Mammary epithelial cell (primary cell): ENCODE measurements at regions of chr21 and their contacts with region 1.

Region 1: GRCh38 chr21:32569261-32570230 is 15.8 kb downstream of the TCP10L start:
- DNase-seq: peak; percentile 78
- H3K4me3 ChIP-seq: peak overlapping the region; percentile 44 to 63 (median 56)
- H3K27ac ChIP-seq: no peak overlapping the region
- H3K4me1 ChIP-seq: peaks cover 22% of the 10 kb centered on the region
- H3K27me3 ChIP-seq: no peaks in the 10 kb centered on the region
- CTCF ChIP-seq: peak; percentile 89 to 92

Region 2: DNA sequence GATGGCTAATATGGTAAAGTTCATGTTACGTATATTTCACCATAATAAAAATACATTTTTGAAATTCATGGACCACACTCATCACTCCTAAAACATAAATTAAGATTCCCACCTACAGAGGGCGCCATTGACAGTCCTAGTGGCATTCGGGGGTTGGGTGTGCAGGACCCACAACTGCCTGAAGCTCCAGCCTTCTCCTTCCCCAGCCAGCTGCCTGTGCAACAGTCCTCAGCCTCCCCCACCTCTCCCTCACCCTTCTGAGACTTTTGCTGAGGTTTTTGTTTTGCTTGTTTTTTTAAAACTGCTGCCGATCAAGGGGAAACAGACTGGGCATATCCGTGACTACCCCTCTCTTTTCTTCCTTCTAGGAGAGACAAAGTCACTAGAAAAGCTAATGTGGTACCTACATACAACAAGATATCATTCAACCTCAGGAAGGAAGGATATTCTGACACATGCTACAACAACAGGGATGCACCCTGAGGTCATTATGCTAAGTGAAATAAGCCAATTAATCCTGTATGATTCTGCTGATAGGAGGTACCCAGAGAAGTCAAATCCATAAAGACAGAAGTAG is 166.3 kb before region 1 on chr21:
- CTCF ChIA-PET with region 1: interaction called, 6 read pairs
- dilution Hi-C with region 1: no loop called
- in situ Hi-C with region 1: no loop called
- intact Hi-C with region 1: loop called (anchors 1 kb)
- DNase-seq: peak; percentile 47
- H3K4me3 ChIP-seq: no peak overlapping the region
- H3K27ac ChIP-seq: no peak overlapping the region
- H3K4me1 ChIP-seq: no peaks in the 10 kb centered on the region
- H3K27me3 ChIP-seq: no peaks in the 10 kb centered on the region
- CTCF ChIP-seq: peak; percentile 69 to 71

Region 3: DNA sequence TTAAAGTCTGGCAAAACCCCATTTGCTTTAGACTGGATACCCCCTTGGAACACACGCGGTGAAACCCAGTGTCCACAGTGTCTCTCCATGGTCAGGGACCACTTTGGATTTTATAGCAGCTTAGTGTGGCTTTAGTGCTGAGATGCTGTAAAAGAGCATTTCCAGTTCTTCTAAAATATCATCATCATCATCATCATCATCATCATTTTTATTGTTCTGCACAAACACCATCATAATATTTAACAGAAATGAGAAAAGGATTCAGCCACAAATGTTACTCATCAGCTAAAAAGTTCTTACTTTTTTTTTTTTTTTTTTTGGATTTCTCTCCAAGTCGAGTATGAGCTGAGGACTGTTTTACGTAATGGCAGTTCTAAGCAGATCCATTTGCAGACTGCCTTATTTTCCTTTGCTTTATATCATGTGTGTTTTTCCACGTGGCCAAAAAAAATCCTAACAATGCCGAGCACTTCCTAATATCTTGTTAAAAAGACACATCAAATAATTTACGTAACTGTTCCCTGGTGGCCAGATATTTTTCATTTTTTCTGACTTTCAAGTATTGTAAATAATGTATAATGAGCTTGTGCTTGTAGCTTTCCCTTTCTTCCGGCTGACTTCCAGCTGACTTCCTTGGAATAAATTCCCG is 94.3 kb before region 1 on chr21:
- CTCF ChIA-PET with region 1: no interaction called
- dilution Hi-C with region 1: no loop called
- in situ Hi-C with region 1: no loop called
- intact Hi-C with region 1: loop called (anchors 5 kb)
- DNase-seq: no peak
- H3K4me3 ChIP-seq: no peak overlapping the region
- H3K27ac ChIP-seq: no peak overlapping the region
- H3K4me1 ChIP-seq: peaks cover 17% of the 10 kb centered on the region
- H3K27me3 ChIP-seq: no peaks in the 10 kb centered on the region
- CTCF ChIP-seq: no peak

Region 4: GRCh38 chr21:32507342-32507919 is 62.1 kb before region 1 on chr21:
- CTCF ChIA-PET with region 1: no interaction called
- dilution Hi-C with region 1: no loop called
- in situ Hi-C with region 1: no loop called
- intact Hi-C with region 1: no loop called
- DNase-seq: no peak
- H3K4me3 ChIP-seq: no peak overlapping the region
- H3K27ac ChIP-seq: no peak overlapping the region
- H3K4me1 ChIP-seq: no peaks in the 10 kb centered on the region
- H3K27me3 ChIP-seq: no peaks in the 10 kb centered on the region
- CTCF ChIP-seq: no peak

Region 5: DNA sequence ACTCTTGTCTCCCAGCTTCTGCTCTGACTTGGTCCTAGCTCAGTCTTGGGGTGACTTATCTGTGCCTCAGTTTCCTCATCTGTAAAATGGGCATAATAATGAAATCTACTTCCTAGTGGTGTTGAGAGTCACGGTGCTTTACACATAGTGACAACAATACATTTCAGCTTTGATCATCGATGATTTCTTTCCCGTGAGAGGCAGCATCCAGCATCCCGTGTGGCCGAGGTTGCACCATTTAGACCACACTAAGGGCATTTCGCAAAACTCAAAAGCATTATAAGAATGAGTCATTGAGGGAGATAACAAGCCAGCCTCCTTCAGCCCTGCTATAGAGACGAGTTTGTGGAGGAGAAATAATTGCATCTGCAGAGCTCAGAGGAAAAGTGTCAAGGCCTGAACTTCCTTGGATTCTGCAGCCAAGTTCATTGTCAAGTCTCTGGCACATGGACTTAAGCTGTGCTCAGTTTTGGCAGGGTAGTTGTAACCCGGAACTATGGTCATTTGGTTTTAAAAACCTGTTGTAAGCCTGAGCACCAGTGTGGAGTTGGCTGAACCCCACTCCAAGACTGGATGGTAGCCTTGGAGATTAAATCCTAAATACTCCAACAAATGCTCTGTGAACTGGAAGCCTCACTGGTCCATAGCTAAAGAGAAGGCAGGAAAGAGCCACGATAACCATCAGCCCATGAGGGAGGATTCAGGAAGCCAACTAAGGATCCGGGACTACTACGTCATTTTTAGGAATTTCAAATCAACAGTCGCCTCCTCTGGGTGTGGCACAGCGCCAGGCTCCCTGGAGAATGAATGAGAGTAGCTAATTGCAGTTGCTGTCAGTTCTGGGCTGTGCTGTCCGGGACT is 48.4 kb before region 1 on chr21:
- CTCF ChIA-PET with region 1: no interaction called
- dilution Hi-C with region 1: no loop called
- in situ Hi-C with region 1: no loop called
- intact Hi-C with region 1: loop called (anchors 2 kb)
- DNase-seq: peak; percentile 68
- H3K4me3 ChIP-seq: no peak overlapping the region
- H3K27ac ChIP-seq: peak overlapping the region; percentile 0
- H3K4me1 ChIP-seq: peaks cover 22% of the 10 kb centered on the region
- H3K27me3 ChIP-seq: no peaks in the 10 kb centered on the region
- CTCF ChIP-seq: no peak

Region 6: GRCh38 chr21:32626621-32627196 is 57.2 kb after region 1 on chr21:
- CTCF ChIA-PET with region 1: no interaction called
- dilution Hi-C with region 1: no loop called
- in situ Hi-C with region 1: no loop called
- intact Hi-C with region 1: no loop called
- DNase-seq: peak; percentile 14
- H3K4me3 ChIP-seq: no peak overlapping the region
- H3K27ac ChIP-seq: no peak overlapping the region
- H3K4me1 ChIP-seq: peaks cover 12% of the 10 kb centered on the region
- H3K27me3 ChIP-seq: no peaks in the 10 kb centered on the region
- CTCF ChIP-seq: no peak

Region 7: DNA sequence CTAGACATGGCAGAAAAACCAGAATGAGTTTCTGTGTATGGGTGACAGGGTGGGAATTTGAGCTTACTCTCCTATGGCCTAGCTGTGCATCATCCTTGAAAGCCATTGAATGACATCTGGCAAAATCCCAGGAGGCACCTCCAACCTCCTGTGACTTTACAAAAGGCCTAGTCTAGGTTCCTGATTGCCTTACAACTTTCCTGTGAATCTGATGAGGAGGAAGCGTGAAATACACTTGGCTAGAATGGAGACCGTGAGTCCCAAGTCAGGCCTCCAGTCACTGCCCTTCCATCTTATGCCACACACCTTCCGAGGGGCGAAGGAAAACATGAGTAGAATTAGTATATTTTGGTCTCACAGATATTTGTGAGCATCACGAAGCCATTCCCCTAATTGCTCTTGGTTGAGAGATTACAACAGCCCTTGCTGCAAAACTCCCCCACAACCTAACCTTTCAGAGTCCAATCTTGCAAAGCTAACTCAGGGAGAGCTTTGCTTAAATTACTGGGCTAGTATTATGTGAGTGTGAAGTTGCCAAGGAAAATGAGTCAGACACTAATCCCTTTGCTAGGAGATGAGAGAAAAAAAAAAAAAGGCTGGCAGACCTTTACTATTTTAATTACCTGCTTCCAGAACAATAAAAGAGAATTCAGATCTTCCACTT is 238.3 kb after region 1 on chr21:
- CTCF ChIA-PET with region 1: no interaction called
- dilution Hi-C with region 1: no loop called
- in situ Hi-C with region 1: no loop called
- intact Hi-C with region 1: no loop called
- DNase-seq: peak; percentile 3
- H3K4me3 ChIP-seq: no peak overlapping the region
- H3K27ac ChIP-seq: no peak overlapping the region
- H3K4me1 ChIP-seq: no peaks in the 10 kb centered on the region
- H3K27me3 ChIP-seq: peaks cover 1% of the 10 kb centered on the region
- CTCF ChIP-seq: no peak